PC-9 (cell line): ENCODE measurements at regions of chr15 and their contacts with region 1.

Region 1: DNA sequence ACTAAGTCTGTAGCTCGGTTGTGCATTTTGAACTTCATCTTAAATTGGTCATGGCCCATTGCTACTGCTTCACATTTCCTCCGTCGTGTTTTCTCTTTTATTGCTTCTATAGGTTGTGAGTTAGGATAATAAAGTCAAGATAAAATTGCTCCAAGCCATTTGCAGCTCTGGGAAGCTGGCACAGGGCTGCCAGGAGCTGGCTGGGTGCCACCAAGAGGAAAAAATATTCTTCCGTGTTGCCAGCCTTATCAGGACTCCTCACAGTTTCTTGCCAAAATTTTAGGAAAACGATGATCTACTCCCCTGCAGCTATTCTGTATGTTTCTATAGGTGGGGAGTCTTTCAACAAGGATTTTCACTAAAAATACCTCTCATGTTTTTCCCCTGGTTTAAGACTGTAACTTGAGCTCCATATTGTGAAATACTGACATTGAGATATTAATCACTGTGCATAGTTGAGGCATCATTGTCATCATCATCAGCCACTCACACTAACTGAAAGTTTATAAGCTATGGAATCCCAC is 55.5 kb upstream of the PIAS1 start:
- DNase-seq: peak; percentile 61 to 65
- H3K4me3 ChIP-seq: peak overlapping the region; percentile 13; the same call in 1 of the 2 replicates
- H3K27ac ChIP-seq: peak overlapping the region; percentile 71
- H3K4me1 ChIP-seq: peaks cover 18% of the 10 kb centered on the region
- H3K27me3 ChIP-seq: no peaks in the 10 kb centered on the region
- CTCF ChIP-seq: no peak

Region 2: GRCh38 chr15:66923438-66923881 is 1075.2 kb before region 1 on chr15:
- CTCF ChIA-PET with region 1: no interaction called
- POLR2A ChIA-PET with region 1: no interaction called
- intact Hi-C with region 1: no loop called
- DNase-seq: peak in 1 of 2 experiments; percentile 35
- H3K4me3 ChIP-seq: no peak overlapping the region
- H3K27ac ChIP-seq: no peak overlapping the region
- H3K4me1 ChIP-seq: peaks cover 9% of the 10 kb centered on the region; the same call in 1 of the 2 replicates
- H3K27me3 ChIP-seq: no peaks in the 10 kb centered on the region
- CTCF ChIP-seq: peak; percentile 59; the same call in 1 of the 2 replicates

Region 3: GRCh38 chr15:68017191-68017590 is 18.5 kb after region 1 on chr15:
- CTCF ChIA-PET with region 1: no interaction called
- POLR2A ChIA-PET with region 1: no interaction called
- intact Hi-C with region 1: loop called (anchors 2 kb)
- DNase-seq: peak; percentile 64 to 84
- H3K4me3 ChIP-seq: no peak overlapping the region
- H3K27ac ChIP-seq: peak overlapping the region; percentile 39; the same call in 1 of the 2 replicates
- H3K4me1 ChIP-seq: 0 out of 2 replicates have a peak, but pooled peaks cover 9% of the 10 kb centered on the region
- H3K27me3 ChIP-seq: no peaks in the 10 kb centered on the region
- CTCF ChIP-seq: no peak

Region 4: GRCh38 chr15:68053701-68054627 is 55.3 kb after region 1 on chr15 and contains the start of gene PIAS1:
- CTCF ChIA-PET with region 1: no interaction called
- POLR2A ChIA-PET with region 1: interaction called, 3 read pairs
- intact Hi-C with region 1: loop called (anchors 1 kb)
- DNase-seq: peak; percentile 67 to 91
- H3K4me3 ChIP-seq: peak within 1 kb of the TSS; percentile 84
- H3K27ac ChIP-seq: peak within 1 kb of the TSS; percentile 32; the same call in 1 of the 2 replicates
- H3K4me1 ChIP-seq: peaks cover 23% of the 10 kb centered on the region; the same call in 1 of the 2 replicates
- H3K27me3 ChIP-seq: no peaks in the 10 kb centered on the region
- CTCF ChIP-seq: no peak
- total RNA-seq, gene PIAS1: 42.2 and 42.5 TPM in 2 replicates

Region 5: GRCh38 chr15:68137096-68137495 is 138.4 kb after region 1 on chr15:
- CTCF ChIA-PET with region 1: no interaction called
- POLR2A ChIA-PET with region 1: no interaction called
- intact Hi-C with region 1: no loop called
- DNase-seq: no peak
- H3K4me3 ChIP-seq: no peak overlapping the region
- H3K27ac ChIP-seq: no peak overlapping the region
- H3K4me1 ChIP-seq: peaks cover 13% of the 10 kb centered on the region
- H3K27me3 ChIP-seq: no peaks in the 10 kb centered on the region
- CTCF ChIP-seq: no peak